Dorsolateral prefrontal cortex (tissue), 120 donors: ENCODE measurements at regions of chr11 and their contacts with region 1.

Region 1: DNA sequence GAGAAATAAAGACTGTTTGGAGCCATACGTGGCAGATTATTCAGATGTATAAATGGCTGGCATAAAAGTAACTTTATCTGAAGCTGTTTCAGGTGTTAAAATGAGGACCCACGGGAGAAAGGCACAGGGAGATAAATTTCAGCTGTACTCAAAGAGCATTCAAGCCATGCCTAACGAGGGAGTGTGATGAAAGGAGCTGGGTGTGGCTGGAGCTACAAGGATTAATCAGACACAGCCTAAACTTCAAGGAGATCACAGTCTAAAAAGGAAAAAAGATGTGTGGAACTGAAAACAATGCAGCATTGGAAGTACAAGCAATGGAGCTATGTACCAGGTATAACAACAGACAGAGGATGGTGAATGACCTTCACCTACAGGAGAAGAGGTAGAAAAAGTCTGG is 120.8 kb upstream of the APOA1 start:
- DNase-seq: no peak
- H3K4me3 ChIP-seq: no peak overlapping the region
- H3K27ac ChIP-seq: peak overlapping the region in 38 of 59 donors; percentile 1 to 81 (median 44)
- H3K27me3 ChIP-seq: no peaks in the 10 kb centered on the region
- CTCF ChIP-seq: no peak

Region 2: DNA sequence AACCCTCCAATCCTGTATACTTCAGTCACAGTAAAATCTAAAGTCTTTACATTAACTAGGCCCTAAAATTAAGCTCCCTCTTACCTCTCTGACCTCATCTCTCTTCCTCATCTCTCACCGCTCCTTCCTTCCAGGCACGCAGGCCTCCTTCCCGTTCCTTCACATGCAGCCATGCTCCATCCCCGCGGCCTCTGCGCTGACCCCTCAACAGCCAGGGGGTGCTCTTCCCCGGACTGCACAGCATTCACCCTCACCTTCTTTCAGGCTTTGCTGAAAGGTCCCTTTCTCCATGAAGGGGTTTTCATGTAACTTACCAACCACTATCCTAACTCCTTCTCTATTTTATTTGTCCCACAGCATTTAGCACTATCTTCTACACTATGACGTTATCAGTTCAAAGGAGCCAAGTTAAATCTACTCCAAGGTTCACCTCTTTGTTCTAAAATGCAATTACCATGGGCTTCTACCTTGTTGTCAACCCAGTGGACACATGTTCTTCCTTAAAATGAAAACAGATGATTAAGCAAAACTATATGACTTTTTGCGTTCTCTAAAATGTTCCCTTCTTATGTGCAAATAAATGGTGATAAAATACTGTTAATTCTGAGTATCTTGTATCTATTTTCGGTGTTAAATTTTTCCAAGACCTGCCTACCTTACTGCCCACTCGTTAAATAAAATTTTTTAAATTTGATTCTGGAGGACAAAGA is 63.0 kb before region 1 on chr11:
- intact Hi-C with region 1: loop called in 1 of 2 experiments (anchors 10 kb)
- DNase-seq: peak in 2 of 10 donors; percentile 29 to 54
- H3K4me3 ChIP-seq: no peak overlapping the region
- H3K27ac ChIP-seq: peak overlapping the region in 45 of 59 donors; percentile 6 to 88 (median 60)
- H3K27me3 ChIP-seq: no peaks in the 10 kb centered on the region
- CTCF ChIP-seq: peak in 53 of 56 donors; percentile 23 to 82 (median 53)